ENCODE measurements at regions of chr9 and their contacts with region 1.

Region 1: GRCh38 chr9:96667361-96667728 is 12.2 kb upstream of the PRXL2C start:
- DNase-seq: no peak
- H3K4me3 ChIP-seq: no peak overlapping the region
- H3K27ac ChIP-seq: no peak overlapping the region
- H3K4me1 ChIP-seq: no peaks in the 10 kb centered on the region
- H3K27me3 ChIP-seq: no peaks in the 10 kb centered on the region
- CTCF ChIP-seq: no peak

Region 2: DNA sequence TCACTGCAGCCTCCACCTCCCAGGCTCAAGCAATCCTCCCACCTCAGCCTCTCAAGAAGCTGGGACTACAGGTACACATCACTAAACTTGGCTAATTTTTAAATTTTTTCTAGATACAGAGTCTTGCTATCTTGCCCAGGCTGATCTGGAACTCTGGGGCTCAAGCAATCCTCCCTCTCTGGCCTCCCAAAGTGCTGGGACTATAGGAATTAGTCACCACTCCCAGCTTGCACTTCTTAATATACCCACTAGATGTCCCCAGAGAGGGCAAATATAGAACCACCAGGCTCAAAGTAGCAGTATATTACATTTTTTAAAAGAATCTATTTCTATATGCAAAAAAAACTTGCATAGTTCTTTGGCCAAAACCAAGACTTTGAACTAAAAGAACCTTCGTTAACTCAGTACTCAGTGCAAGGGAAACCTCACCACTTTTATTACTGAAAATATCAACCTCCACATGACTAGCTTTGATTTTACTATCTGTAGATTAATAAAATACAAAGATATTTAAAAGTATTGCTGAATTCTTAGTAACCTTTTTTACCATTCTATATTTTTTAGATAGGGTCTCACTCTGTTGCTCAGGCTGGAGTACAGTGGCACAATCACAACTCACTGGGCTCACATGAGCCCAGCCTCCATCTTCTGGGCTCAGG is 339.5 kb before region 1 on chr9:
- intact Hi-C with region 1: loop called (anchors 2 kb)
- DNase-seq: peak in 1 of 2 donors; percentile 71
- H3K4me3 ChIP-seq: no peak overlapping the region
- H3K27ac ChIP-seq: no peak overlapping the region
- H3K4me1 ChIP-seq: no peaks in the 10 kb centered on the region
- H3K27me3 ChIP-seq: no peaks in the 10 kb centered on the region
- CTCF ChIP-seq: peak; percentile 76 to 90 (median 86)